GM10248 (cell line): ENCODE measurements at regions of chr1 and their contacts with region 1.

Region 1: DNA sequence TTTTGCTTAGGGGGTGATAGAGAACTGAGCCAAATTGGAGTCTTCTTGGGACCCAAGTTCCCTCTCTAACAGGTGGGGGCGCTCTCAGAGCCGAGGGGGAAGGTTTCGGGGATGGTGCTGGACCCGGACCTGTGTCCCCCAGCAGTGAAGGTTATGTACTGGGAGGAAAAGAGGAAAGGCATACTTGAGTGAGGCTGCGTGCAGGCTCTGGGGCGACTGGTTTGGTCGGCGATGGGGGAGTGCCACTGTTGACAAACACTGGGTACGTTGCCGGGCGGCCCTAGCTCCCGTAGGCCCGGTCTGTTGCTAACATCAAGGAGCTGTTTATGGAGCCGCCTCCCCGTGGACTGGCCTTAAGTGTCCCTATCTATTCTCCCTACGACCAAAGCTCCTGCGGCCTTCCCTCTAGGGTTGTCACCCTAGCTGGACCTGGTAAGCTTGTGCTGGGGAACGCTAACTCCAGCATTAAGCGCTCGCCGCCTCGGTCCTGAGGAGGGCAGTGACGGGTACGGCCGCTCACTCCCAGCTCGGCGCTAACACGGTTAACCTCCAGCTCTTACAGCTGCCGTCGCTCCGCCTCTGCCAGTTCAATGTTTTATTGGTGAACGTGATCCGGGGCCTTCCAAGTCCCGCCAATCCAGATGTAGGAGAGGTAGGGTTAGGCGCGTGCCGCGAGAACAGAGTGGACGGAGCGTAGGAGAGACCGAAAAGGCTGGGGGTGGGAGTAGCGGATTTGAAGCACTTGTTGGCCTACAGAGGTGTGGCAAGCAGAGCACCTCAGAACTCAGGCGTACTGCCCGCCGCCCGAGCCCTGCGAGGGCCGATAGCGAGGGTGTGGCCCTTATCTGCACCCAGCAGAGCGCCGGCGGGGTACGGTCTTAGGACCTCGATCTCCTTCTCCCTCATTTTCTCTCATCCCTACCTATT is at the start of gene PPOX:
- DNase-seq: peak; percentile 92
- CTCF ChIP-seq: peak; percentile 58

Region 2: DNA sequence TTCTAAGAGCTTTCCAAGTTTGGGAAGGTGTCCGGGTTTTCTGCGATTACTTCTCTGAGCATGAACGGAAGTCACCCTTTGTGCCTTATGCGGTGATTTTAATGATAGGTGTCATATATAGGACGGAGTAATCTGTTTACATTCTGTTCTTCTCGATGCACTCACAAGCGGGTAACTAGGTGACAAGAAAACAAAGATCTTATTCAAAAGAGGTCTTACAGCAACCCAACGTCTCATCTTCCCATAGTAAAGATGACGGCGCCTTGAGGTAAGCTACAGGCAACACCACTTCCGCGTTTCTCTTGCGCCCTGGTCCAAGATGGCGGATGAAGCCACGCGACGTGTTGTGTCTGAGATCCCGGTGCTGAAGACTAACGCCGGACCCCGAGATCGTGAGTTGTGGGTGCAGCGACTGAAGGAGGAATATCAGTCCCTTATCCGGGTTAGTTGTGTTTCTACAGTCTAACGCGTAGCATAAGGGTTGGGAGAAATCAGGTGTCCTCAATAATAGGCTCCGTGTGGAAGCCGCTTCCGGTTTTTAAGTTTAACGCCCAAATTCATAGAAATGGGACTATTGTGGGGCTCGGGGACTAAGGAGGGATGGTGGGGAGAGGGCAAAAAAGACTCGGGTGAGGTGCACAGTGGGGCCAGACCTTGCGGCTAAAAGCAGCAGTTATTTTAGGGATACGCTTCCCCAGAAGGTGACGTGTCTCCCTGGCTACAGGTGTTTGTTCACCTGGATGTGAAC is 12.2 kb before region 1 on chr1 and contains the start of gene UFC1:
- CTCF ChIA-PET with region 1: interaction called, 20 read pairs
- POLR2A ChIA-PET with region 1: interaction called, 11 read pairs
- DNase-seq: peak; percentile 87
- CTCF ChIP-seq: no peak

Region 3: DNA sequence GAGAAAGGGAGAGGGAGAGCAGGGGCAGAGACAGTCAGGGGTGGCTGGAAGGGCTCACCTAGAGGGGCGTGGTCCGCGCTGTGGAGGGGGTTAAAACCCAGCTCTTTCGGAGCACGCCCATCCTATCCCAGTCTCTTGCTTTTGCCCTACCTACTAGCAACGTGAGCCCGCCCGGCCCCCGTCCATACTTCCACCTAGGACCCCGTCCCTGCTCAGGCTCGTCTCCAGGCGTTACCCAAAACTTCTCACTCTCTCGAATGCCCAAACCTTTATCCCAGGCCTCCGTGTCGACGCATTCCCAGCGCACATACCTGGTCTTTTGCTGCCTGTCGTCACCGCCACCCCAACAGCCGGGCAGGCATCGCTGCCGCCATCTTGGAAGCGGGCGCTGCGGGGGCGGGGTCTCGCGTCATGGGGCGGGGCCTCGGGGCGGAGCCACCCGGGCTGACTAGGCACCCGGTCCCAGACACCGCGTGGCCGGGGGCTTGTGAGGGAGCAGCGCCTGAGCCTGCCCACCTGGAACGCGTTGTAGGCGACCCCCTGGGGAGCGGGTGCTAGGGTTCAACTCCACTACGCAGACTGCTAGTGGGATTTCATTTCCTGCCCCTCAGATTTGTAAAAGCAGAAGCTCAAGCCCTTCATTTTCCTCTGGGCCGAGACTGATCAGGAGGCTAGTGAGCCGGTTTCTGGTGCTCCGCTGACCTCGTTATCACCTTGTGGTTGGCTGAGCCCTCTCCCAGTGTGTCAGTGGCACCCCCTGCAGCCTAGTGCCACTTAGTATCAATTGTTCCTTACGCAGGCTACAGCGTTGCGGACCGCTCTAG is 11.3 kb after region 1 on chr1 and contains the start of gene B4GALT3:
- CTCF ChIA-PET with region 1: interaction called, 22 read pairs
- POLR2A ChIA-PET with region 1: interaction called, 4 read pairs
- DNase-seq: peak; percentile 97
- CTCF ChIP-seq: peak; percentile 7

Region 4: GRCh38 chr1:161185282-161185682 is 19.3 kb after region 1 on chr1:
- CTCF ChIA-PET with region 1: interaction called, 32 read pairs
- POLR2A ChIA-PET with region 1: interaction called, 4 read pairs
- DNase-seq: peak; percentile 85
- CTCF ChIP-seq: no peak

Region 5: DNA sequence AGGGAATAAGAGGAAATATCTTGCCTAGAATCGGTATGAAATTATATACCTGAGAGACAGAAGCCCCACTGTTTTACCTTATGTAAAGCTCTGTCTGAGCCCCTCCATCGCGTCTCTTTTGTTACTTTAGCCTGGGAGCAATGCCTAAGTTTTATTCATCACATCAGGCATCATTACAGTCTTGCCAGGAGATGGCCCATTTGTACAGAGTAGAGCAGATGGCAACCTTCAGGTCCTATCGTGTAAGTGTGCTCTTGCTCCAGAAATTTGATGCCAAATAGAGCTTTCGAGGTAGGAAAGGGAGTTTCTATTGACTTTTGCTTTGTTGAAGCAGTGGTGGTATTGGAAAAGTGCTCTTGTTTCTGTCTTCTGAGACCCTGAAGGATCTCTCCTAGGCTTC is 176.8 kb after region 1 on chr1:
- CTCF ChIA-PET with region 1: no interaction called
- POLR2A ChIA-PET with region 1: no interaction called
- DNase-seq: no peak
- CTCF ChIP-seq: no peak